Naive thymus-derived CD4-positive, alpha-beta T cell (primary cell): ENCODE measurements at regions of chr22 and their contacts with region 1.

Region 1: GRCh38 chr22:41448189-41448808 is 1.7 kb upstream of the TOB2 start:
- DNase-seq: peak; percentile 62 to 95 (median 92)
- ATAC-seq: peak; percentile 78
- H3K4me3 ChIP-seq: peak overlapping the region; percentile 90
- H3K4me3 Mint-ChIP-seq: peak overlapping the region; percentile 92 to 98 (median 94)
- H3K27ac ChIP-seq: peak overlapping the region; percentile 88
- H3K27ac Mint-ChIP-seq: peak overlapping the region; percentile 91 to 99 (median 94)
- H3K4me1 ChIP-seq: peaks cover 7% of the 10 kb centered on the region in 2 donors
- H3K4me1 Mint-ChIP-seq: peaks cover 6 to 25% (median 21%) of the 10 kb centered on the region in 7 donors
- H3K27me3 ChIP-seq: no peaks in the 10 kb centered on the region
- H3K27me3 Mint-ChIP-seq: no peaks in the 10 kb centered on the region

Region 2: DNA sequence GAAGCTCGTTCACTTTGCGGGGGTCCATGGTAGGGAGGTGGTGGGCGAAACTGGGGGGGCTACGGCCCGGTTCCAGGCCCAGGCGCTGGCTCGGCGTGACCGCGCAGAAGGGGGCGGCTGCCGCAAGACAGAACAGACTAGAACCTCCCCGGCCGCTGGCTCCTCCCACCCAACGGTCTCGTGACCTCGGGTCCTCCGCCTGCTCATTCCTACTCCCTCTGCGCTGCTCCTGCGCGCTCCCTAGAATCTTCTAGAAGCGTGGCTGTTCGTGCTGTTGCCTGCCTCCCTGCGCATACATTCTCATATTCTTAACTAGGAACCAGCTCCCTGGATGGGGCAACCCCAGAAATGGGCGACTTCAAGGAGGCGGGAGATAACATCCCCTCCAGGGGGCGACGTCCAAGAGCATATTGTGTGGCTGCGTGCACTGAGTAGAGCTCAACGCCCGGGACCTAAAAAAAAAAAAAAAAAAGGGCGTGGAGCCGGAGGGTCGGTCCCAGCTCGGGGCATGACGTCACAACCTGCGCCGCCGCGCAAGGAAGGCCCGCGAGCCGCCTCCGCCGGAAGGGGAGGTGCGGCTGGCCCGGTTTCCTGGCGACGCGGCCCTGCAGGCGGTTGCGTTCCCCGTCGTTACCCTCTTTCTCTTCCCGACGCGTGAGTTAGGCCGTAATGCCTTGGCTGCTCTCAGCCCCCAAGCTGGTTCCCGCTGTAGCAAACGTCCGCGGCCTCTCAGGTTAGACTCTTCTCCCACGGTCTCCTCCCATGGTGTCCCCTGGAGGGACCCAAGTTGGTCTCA is 591.6 kb before region 1 on chr22 and contains the starts of genes ST13 and XPNPEP3:
- CTCF ChIA-PET with region 1: no interaction called
- POLR2A ChIA-PET with region 1: interaction called, 4 read pairs
- intact Hi-C with region 1: loop called in 1 of 2 experiments (anchors 1 kb)
- DNase-seq: peak; percentile 96 to 98 (median 97)
- ATAC-seq: peak; percentile 94
- H3K4me3 ChIP-seq: peak within 1 kb of the TSS; percentile 83
- H3K4me3 Mint-ChIP-seq: peak within 1 kb of the TSS; percentile 94 to 100 (median 98)
- H3K27ac ChIP-seq: peak within 1 kb of the TSS; percentile 97
- H3K27ac Mint-ChIP-seq: peak within 1 kb of the TSS; percentile 98 to 100 (median 100)
- H3K4me1 ChIP-seq: peaks cover 24 to 39% of the 10 kb centered on the region in 2 donors
- H3K4me1 Mint-ChIP-seq: peaks cover 25 to 72% (median 64%) of the 10 kb centered on the region in 7 donors
- H3K27me3 ChIP-seq: no peaks in the 10 kb centered on the region
- H3K27me3 Mint-ChIP-seq: peaks cover 0 to 2% (median 0%) of the 10 kb centered on the region in 5 donors
- total RNA-seq, gene ST13: 126 to 247 (median 185) TPM
- total RNA-seq, gene XPNPEP3: 14.4 to 21.8 (median 19.0) TPM

Region 3: DNA sequence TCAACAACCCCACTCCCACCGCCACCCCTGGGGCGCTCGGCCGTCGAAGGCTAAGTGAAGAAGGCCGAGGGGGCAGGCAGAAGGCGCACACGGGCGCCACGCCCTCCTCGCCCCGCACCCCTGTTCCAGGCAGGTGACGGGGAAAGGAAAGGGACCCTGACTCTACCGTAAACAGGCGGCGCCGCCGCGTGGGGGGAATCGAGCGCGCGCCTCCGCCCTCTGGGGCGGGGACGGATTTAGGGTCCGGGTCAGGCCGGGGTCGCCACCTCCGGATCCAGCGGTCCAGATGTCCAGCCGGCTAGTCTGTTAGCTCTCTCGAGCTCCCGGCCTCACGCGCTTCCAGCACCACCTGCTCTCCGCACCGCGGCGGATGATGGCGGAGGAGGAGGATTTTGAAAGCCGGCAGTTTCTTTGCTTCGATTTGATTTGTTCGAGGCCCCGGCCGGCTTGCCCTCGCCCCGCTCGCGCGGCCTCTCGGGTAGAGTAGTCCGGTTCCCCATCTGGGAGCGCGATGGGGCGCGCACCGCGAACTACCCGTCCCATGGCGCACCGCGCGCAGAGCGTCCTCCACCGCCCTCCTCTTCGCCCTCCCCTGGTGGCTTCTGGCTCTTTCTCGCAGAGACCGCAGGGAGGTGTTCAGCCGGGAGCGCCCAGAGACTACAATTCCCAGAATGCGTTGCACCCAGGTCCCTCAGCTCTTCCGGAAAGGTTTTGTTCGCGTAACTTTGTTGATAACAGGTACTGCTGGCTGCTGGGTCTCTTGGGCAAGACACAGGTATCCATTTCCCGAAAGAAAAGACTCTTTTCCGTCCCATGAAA is 162.3 kb before region 1 on chr22 and contains the start of gene RANGAP1:
- CTCF ChIA-PET with region 1: no interaction called
- POLR2A ChIA-PET with region 1: interaction called, 5 read pairs
- intact Hi-C with region 1: loop called (anchors 1 kb)
- DNase-seq: peak; percentile 95 to 99 (median 99)
- ATAC-seq: peak; percentile 96
- H3K4me3 ChIP-seq: peak within 1 kb of the TSS; percentile 93
- H3K4me3 Mint-ChIP-seq: peak within 1 kb of the TSS; percentile 90 to 99 (median 96)
- H3K27ac ChIP-seq: peak within 1 kb of the TSS; percentile 99
- H3K27ac Mint-ChIP-seq: peak within 1 kb of the TSS; percentile 95 to 99 (median 98)
- H3K4me1 ChIP-seq: peaks cover 10 to 15% of the 10 kb centered on the region in 2 donors
- H3K4me1 Mint-ChIP-seq: peaks cover 21 to 46% (median 42%) of the 10 kb centered on the region in 7 donors
- H3K27me3 ChIP-seq: no peaks in the 10 kb centered on the region
- H3K27me3 Mint-ChIP-seq: no peaks in the 10 kb centered on the region
- total RNA-seq, gene RANGAP1: 60.7 to 122 (median 72.4) TPM

Region 4: GRCh38 chr22:41417622-41418390 is 30.5 kb before region 1 on chr22:
- CTCF ChIA-PET with region 1: no interaction called
- POLR2A ChIA-PET with region 1: interaction called, 11 read pairs
- intact Hi-C with region 1: no loop called
- DNase-seq: no peak
- ATAC-seq: no peak
- H3K4me3 ChIP-seq: no peak overlapping the region
- H3K4me3 Mint-ChIP-seq: no peak overlapping the region
- H3K27ac ChIP-seq: no peak overlapping the region
- H3K27ac Mint-ChIP-seq: peak overlapping the region in 3 of 9 donors; percentile 21 to 62 (median 33)
- H3K4me1 ChIP-seq: peaks cover 12 to 16% of the 10 kb centered on the region in 2 donors
- H3K4me1 Mint-ChIP-seq: peaks cover 8 to 26% (median 23%) of the 10 kb centered on the region in 7 donors
- H3K27me3 ChIP-seq: no peaks in the 10 kb centered on the region
- H3K27me3 Mint-ChIP-seq: no peaks in the 10 kb centered on the region

Region 5: GRCh38 chr22:41526837-41527799 is 78.8 kb after region 1 on chr22:
- CTCF ChIA-PET with region 1: interaction called, 3 read pairs
- POLR2A ChIA-PET with region 1: interaction called, 8 read pairs
- intact Hi-C with region 1: loop called in 1 of 2 experiments (anchors 2 kb)
- DNase-seq: peak; percentile 36 to 75 (median 64)
- ATAC-seq: peak; percentile 78
- H3K4me3 ChIP-seq: no peak overlapping the region
- H3K4me3 Mint-ChIP-seq: no peak overlapping the region
- H3K27ac ChIP-seq: peak overlapping the region; percentile 48
- H3K27ac Mint-ChIP-seq: peak overlapping the region in 7 of 9 donors; percentile 40 to 84 (median 77)
- H3K4me1 ChIP-seq: peaks cover 10 to 16% of the 10 kb centered on the region in 2 donors
- H3K4me1 Mint-ChIP-seq: peaks cover 0 to 25% (median 20%) of the 10 kb centered on the region in 7 donors
- H3K27me3 ChIP-seq: no peaks in the 10 kb centered on the region
- H3K27me3 Mint-ChIP-seq: no peaks in the 10 kb centered on the region

Region 6: DNA sequence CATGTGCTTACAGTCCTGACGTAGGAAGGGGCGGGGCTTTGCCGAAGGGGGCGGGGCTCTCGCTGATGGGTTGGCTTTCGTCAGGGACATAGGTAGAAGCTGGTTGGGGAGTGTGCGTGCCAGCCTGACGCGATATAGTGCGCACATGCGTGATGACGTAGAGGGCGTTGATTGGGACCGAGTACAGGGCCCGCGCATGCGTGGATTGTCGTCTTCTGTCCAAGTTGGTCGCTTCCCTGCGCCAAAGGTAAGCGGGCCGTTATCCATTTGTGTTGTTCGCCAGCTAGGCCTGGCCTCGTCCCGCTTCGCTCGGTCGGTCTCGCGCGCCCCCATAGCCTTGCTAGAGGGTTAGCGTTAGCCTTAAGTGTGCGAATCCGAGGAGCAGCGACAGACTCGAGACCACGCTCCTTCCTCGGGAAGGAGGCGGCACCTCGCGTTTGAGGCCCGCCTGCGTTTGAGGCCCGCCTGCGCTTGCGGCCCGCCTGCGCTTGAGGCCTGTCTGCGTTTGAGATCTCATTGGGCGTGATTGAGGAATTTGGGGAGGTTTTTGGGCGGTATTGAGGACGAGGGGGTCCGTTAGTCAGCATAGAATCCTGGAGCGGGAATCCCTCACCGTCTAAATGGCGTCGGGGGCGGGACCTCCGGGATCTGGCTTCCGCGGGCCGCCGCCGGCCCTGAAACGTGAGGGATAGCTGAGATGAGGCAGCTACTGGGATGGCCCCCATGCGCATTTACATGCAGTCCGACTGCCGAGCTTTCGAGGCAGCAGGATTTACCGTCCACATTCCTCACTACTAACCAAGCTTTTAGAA is 173.0 kb after region 1 on chr22 and contains the start of gene XRCC6:
- CTCF ChIA-PET with region 1: no interaction called
- POLR2A ChIA-PET with region 1: interaction called, 5 read pairs
- intact Hi-C with region 1: loop called (anchors 1 kb)
- DNase-seq: peak; percentile 97 to 100 (median 99)
- ATAC-seq: peak; percentile 97
- H3K4me3 ChIP-seq: peak within 1 kb of the TSS; percentile 99
- H3K4me3 Mint-ChIP-seq: peak within 1 kb of the TSS; percentile 93 to 99 (median 97)
- H3K27ac ChIP-seq: peak within 1 kb of the TSS; percentile 99
- H3K27ac Mint-ChIP-seq: peak within 1 kb of the TSS; percentile 95 to 100 (median 99)
- H3K4me1 ChIP-seq: peaks cover 18 to 20% of the 10 kb centered on the region in 2 donors
- H3K4me1 Mint-ChIP-seq: peaks cover 22 to 63% (median 44%) of the 10 kb centered on the region in 7 donors
- H3K27me3 ChIP-seq: no peaks in the 10 kb centered on the region
- H3K27me3 Mint-ChIP-seq: peaks cover 0 to 3% (median 0%) of the 10 kb centered on the region in 5 donors
- total RNA-seq, gene XRCC6: 139 to 270 (median 160) TPM